ENCODE measurements at regions of chr3 and their contacts with region 1.

Region 1: DNA sequence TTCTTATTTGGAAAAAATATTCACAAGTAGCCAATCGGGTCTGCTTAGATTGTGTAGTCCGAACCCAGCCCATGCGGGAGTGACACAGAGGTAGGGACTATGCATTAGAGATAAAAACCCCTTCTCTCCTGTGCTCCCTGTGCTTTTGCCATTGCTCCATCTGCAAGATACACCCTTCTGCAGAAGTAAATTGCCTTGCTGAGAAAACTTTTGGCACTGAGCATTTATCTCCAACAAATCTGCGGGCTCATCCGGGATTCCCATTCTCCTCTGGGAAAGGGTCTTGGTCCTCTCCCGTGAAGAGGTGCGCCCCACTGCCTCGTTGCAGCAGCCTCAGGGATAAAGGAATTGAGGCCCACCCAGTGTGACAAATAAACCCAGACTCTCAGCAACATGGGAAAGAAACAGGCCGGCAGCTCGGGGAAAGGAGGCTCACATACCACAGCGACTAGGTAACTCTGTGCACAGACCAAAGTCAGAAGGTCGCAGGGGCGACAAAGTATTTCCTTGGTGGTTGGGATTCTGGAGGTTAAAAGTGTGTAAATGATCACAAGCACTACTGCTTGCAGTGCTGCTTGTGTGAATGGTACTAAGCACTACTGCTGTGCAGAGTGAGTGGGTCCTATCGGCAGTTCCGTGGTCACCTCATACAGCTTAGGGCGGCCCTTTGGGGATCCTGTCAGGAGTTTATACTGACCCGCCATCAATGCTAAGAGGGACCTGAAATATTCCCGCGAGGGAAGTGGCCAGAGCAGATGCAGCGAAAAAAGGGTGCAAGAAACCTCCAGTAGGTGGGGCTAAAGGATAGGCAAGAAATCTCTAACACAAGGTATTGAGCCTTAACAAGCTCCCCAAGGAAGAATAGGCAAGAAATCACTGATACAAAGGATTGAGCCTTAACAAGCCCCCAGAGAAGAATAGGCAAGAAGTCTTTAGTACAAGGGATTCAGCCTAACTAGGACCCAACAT is 54.3 kb downstream of the GSK3B start:
- DNase-seq: no peak
- ATAC-seq: no peak
- H3K4me3 ChIP-seq: no peak overlapping the region
- H3K27ac ChIP-seq: no peak overlapping the region
- H3K4me1 ChIP-seq: peaks cover 0 to 27% (median 6%) of the 10 kb centered on the region in 12 donors
- H3K27me3 ChIP-seq: no peaks in the 10 kb centered on the region
- CTCF ChIP-seq: peak in 2 of 12 donors; percentile 12 to 17
- POLR2A ChIP-seq: no peak

Region 2: DNA sequence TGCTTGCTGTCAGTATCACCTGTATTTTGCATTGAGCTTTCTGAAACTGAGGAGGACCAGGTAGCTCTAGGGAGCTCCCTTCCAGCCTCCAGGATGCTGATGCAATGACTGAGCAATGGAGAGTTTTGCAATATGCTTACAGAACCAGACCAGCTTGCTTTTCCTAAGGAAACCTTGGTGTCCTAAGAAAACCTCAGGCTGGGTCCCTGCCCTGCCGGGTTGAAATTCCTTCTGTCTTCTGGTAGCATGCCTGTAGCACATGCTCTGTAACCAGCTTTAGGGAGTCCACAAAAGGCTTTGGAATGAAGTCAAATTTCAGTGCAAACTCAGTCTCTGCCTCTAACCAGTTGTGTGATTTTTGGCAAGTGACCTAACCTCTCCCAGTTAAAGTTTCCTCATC is 120.1 kb after region 1 on chr3:
- intact Hi-C with region 1: loop called in 1 of 10 experiments (anchors 10 kb)
- DNase-seq: peak in 2 of 5 donors; percentile 58 to 61
- ATAC-seq: peak in 3 of 4 donors; percentile 56 to 94 (median 86)
- H3K4me3 ChIP-seq: no peak overlapping the region
- H3K27ac ChIP-seq: no peak overlapping the region
- H3K4me1 ChIP-seq: peaks cover 0 to 12% (median 0%) of the 10 kb centered on the region in 12 donors
- H3K27me3 ChIP-seq: no peaks in the 10 kb centered on the region
- CTCF ChIP-seq: no peak
- POLR2A ChIP-seq: no peak

Region 3: DNA sequence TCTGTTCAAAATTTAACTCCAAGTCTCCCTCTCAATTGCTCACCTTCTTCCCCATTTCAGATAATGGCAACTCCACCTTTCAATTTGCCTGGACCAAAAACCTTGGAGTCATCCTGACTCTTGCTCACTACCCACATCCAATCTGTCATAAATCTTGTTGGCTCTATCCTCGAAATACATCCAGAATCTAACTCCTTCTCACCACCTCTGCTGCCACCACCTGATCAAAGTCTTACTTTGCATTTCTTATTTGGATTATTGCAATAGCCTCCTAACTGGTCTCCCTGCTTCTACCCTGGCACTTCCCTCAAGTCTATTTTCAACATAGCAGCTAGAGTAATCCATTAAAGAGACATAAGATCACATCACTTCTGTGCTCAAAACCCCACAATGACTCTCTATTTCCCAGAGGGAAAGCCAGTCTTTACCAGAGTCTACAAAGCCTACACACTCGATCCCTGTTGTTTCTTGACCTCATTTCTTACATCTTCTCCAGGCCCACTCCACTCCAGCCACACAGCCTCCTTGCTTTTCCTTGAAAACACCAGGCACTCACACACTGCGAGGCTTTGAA is 158.5 kb after region 1 on chr3:
- intact Hi-C with region 1: loop called in 1 of 10 experiments (anchors 10 kb)
- DNase-seq: no peak
- ATAC-seq: peak in 3 of 4 donors; percentile 28 to 36 (median 35)
- H3K4me3 ChIP-seq: no peak overlapping the region
- H3K27ac ChIP-seq: no peak overlapping the region
- H3K4me1 ChIP-seq: peaks cover 0 to 12% (median 5%) of the 10 kb centered on the region in 12 donors
- H3K27me3 ChIP-seq: no peaks in the 10 kb centered on the region
- CTCF ChIP-seq: peak in 7 of 12 donors; percentile 18 to 43 (median 35)
- POLR2A ChIP-seq: no peak

Measured in heart left ventricle (tissue), 16 donors.